A673 (cell line): ENCODE measurements at regions of chr12 and their contacts with region 1.

Region 1: GRCh38 chr12:79514730-79515529 is 175.8 kb downstream of the PAWR start:
- DNase-seq: no peak
- H3K4me3 ChIP-seq: no peak overlapping the region
- H3K27ac ChIP-seq: no peak overlapping the region
- H3K4me1 ChIP-seq: no peaks in the 10 kb centered on the region
- H3K27me3 ChIP-seq: no peaks in the 10 kb centered on the region
- CTCF ChIP-seq: no peak

Region 2: GRCh38 chr12:78674311-78675090 is 840.4 kb before region 1 on chr12:
- CTCF ChIA-PET with region 1: no interaction called
- POLR2A ChIA-PET with region 1: no interaction called
- intact Hi-C with region 1: loop called (anchors 5 kb)
- DNase-seq: peak; percentile 67
- H3K4me3 ChIP-seq: no peak overlapping the region
- H3K27ac ChIP-seq: peak overlapping the region; percentile 13
- H3K4me1 ChIP-seq: peaks cover 21% of the 10 kb centered on the region
- H3K27me3 ChIP-seq: no peaks in the 10 kb centered on the region
- CTCF ChIP-seq: no peak